Heart right ventricle (tissue), 16 donors: ENCODE measurements at regions of chr10 and their contacts with region 1.

Region 1: DNA sequence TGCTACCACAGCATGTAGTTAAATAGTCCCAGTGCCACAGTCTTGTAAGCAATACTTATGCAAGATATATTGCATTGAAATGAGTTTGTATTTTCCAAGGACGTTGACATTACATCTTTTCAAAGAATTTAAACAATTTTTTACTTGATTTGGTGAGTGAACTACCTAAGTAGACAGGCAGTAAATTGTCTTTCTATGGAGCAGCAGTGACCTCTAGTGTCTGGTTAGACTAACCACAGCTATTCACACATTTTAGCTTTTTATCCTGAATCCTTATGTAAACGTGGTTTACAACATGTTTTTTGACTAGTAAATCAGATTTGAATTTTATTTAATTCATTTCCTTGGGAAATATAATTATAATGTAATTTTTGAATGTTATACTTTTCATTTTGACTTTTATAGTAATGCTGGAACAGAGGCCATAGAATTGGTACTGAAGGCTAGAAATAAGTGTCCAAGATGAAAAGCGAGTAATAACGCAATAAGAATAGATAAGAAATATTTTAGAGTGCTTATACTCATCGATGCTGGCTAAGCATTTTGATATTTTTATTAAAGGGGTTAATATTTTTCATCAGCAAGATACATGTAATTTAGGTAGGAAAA is 5.6 kb downstream of the LRRTM3 start:
- DNase-seq: no peak
- ATAC-seq: peak in 4 of 8 donors; percentile 31 to 60 (median 44)
- H3K4me3 ChIP-seq: no peak overlapping the region
- H3K27ac ChIP-seq: no peak overlapping the region
- H3K4me1 ChIP-seq: peaks cover 0 to 9% (median 0%) of the 10 kb centered on the region in 9 donors
- H3K27me3 ChIP-seq: peaks cover 0 to 47% (median 28%) of the 10 kb centered on the region in 7 donors
- CTCF ChIP-seq: peak; percentile 56 to 86 (median 83)

Region 2: DNA sequence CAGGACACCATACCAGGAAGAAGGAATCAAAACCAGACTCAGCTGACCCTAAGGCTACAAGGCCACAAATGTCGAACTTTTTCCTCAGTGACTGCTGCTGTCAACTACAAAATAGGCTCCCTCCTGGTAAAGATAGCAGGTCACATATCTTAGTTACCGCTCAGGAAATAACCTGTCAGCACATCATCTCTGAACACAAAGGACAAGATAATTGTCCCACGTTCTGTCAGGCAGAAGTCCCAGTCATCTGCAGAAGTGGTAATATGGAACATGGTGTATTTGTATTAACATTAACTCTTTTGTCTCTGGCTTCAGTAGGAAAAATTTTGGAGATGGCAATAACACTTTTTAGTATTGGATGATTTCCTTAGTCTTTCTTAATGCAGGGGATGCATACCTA is 635.8 kb before region 1 on chr10:
- intact Hi-C with region 1: loop called in 1 of 10 experiments (anchors 5 kb)
- DNase-seq: no peak
- ATAC-seq: peak in 4 of 8 donors; percentile 27 to 82 (median 48)
- H3K4me3 ChIP-seq: no peak overlapping the region
- H3K27ac ChIP-seq: no peak overlapping the region
- H3K4me1 ChIP-seq: peaks cover 0 to 12% (median 4%) of the 10 kb centered on the region in 9 donors
- H3K27me3 ChIP-seq: no peaks in the 10 kb centered on the region
- CTCF ChIP-seq: no peak